Heart right ventricle (tissue), 16 donors: ENCODE measurements at regions of chr6 and their contacts with region 1.

Region 1: GRCh38 chr6:110682460-110682853 is 132.8 kb downstream of the CDK19 start:
- DNase-seq: peak in 1 of 2 donors; percentile 85
- ATAC-seq: peak; percentile 91 to 98 (median 96)
- H3K4me3 ChIP-seq: no peak overlapping the region
- H3K27ac ChIP-seq: peak overlapping the region in 5 of 10 donors; percentile 27 to 61 (median 57)
- H3K4me1 ChIP-seq: peaks cover 0 to 30% (median 17%) of the 10 kb centered on the region in 9 donors
- H3K27me3 ChIP-seq: no peaks in the 10 kb centered on the region
- CTCF ChIP-seq: peak; percentile 64 to 84 (median 78)

Region 2: GRCh38 chr6:110537208-110538123 is 145.0 kb before region 1 on chr6:
- intact Hi-C with region 1: loop called in 4 of 10 experiments (anchors 5 to 10 kb)
- DNase-seq: no peak
- ATAC-seq: peak in 5 of 8 donors; percentile 50 to 79 (median 70)
- H3K4me3 ChIP-seq: no peak overlapping the region
- H3K27ac ChIP-seq: peak overlapping the region in 7 of 10 donors; percentile 14 to 57 (median 47)
- H3K4me1 ChIP-seq: peaks cover 0 to 25% (median 10%) of the 10 kb centered on the region in 9 donors
- H3K27me3 ChIP-seq: no peaks in the 10 kb centered on the region
- CTCF ChIP-seq: no peak

Region 3: GRCh38 chr6:110815217-110816109 is 133.0 kb after region 1 on chr6 and contains the start of gene CDK19:
- intact Hi-C with region 1: loop called in 1 of 10 experiments (anchors 10 kb)
- DNase-seq: peak; percentile 97 to 98
- ATAC-seq: peak; percentile 96 to 99 (median 98)
- H3K4me3 ChIP-seq: peak within 1 kb of the TSS; percentile 70 to 97 (median 88)
- H3K27ac ChIP-seq: peak within 1 kb of the TSS; percentile 87 to 96 (median 94)
- H3K4me1 ChIP-seq: peaks cover 0 to 45% (median 16%) of the 10 kb centered on the region in 9 donors
- H3K27me3 ChIP-seq: no peaks in the 10 kb centered on the region
- CTCF ChIP-seq: no peak
- total RNA-seq, gene CDK19: 4.6 to 13.0 (median 8.7) TPM

Region 4: GRCh38 chr6:110944681-110945151 is 262.3 kb after region 1 on chr6:
- intact Hi-C with region 1: loop called in 9 of 10 experiments (anchors 1 to 5 kb)
- DNase-seq: no peak
- ATAC-seq: peak in 1 of 8 donors; percentile 57
- H3K4me3 ChIP-seq: no peak overlapping the region
- H3K27ac ChIP-seq: no peak overlapping the region
- H3K4me1 ChIP-seq: peaks cover 0 to 14% (median 0%) of the 10 kb centered on the region in 9 donors
- H3K27me3 ChIP-seq: no peaks in the 10 kb centered on the region
- CTCF ChIP-seq: no peak

Region 5: GRCh38 chr6:110999634-111000270 is 317.3 kb after region 1 on chr6:
- intact Hi-C with region 1: loop called in 2 of 10 experiments (anchors 5 kb)
- DNase-seq: no peak
- ATAC-seq: peak in 1 of 8 donors; percentile 36
- H3K4me3 ChIP-seq: no peak overlapping the region
- H3K27ac ChIP-seq: no peak overlapping the region
- H3K4me1 ChIP-seq: no peaks in the 10 kb centered on the region
- H3K27me3 ChIP-seq: no peaks in the 10 kb centered on the region
- CTCF ChIP-seq: peak; percentile 14 to 66 (median 47)